ENCODE measurements at regions of chr5 and their contacts with region 1.

Region 1: DNA sequence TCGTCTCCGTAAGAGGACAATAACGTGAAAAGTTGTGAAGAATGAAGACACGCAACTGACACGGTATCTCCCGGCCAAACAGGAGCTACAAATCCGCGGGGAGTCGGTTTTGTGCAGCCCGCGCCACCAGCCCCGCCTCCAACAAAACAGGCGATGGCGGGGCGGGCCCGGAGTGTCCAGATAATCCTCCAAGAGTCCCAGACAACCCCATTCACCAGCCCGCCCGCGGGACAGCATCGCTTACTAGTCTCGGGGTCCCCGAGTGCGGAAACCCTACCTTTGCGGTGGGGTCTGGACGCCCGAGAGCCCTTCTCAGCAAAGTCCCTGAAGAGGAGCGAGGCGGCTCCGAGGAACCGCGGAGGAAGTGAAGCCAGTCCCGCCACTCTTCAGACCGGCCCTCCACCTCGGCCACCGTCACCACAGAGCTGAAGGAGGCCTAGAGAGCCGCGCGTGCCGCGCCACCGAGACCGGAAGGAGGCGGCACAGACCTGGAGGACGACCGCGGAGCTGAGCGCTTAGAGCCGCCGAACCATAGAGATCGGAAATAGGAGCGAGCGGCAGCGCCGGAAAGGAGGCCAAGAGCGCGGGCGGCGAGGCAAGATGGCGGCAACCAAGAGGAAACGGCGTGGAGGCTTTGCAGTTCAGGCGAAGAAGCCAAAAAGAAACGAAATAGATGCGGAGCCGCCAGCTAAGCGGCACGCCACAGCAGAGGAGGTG is at the starts of genes BRIX1 and RAD1:
- DNase-seq: peak; percentile 82 to 96 (median 91)
- ATAC-seq: peak; percentile 96 to 99 (median 98)
- H3K4me3 ChIP-seq: peak within 1 kb of the TSS; percentile 78 to 100
- H3K4me3 Mint-ChIP-seq: peak within 1 kb of the TSS in 1 of 3 donors; percentile 61
- H3K27ac ChIP-seq: peak within 1 kb of the TSS; percentile 84
- H3K27ac Mint-ChIP-seq: no peak within 1 kb of the TSS
- H3K4me1 ChIP-seq: peaks cover 20 to 21% of the 10 kb centered on the region in 2 experiments
- H3K4me1 Mint-ChIP-seq: peaks cover 34 to 38% (median 36%) of the 10 kb centered on the region in 3 donors
- H3K27me3 ChIP-seq: no peaks in the 10 kb centered on the region
- H3K27me3 Mint-ChIP-seq: no peaks in the 10 kb centered on the region
- total RNA-seq, gene BRIX1: 24.4 to 26.2 (median 24.4) TPM
- total RNA-seq, gene RAD1: 18.9 to 30.6 (median 20.7) TPM

Region 2: DNA sequence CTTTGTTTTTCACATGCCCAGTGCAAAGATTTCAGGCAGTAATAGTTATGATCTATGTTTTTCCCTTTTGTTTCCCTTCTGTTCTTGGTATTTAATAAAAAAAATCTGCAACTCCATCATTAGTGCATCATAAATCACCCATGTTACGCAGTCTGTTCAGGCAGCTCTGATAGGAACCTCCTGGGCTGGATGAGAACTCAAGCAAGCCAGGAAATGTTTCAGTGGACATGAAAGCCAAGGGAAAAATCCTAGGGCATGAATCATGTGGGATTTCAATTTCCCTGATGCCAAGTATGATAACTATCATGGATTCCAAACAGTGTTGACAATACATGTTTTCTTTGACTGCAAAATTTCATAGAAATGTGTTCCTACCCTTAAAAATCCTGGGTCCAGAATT is 1594.3 kb before region 1 on chr5:
- CTCF ChIA-PET with region 1: no interaction called
- POLR2A ChIA-PET with region 1: no interaction called
- DNase-seq: no peak
- ATAC-seq: no peak
- H3K4me3 ChIP-seq: no peak overlapping the region
- H3K4me3 Mint-ChIP-seq: no peak overlapping the region
- H3K27ac ChIP-seq: no peak overlapping the region
- H3K27ac Mint-ChIP-seq: no peak overlapping the region
- H3K4me1 ChIP-seq: no peaks in the 10 kb centered on the region
- H3K4me1 Mint-ChIP-seq: no peaks in the 10 kb centered on the region
- H3K27me3 ChIP-seq: no peaks in the 10 kb centered on the region
- H3K27me3 Mint-ChIP-seq: no peaks in the 10 kb centered on the region

Region 3: GRCh38 chr5:35083150-35083549 is 167.9 kb after region 1 on chr5:
- CTCF ChIA-PET with region 1: no interaction called
- POLR2A ChIA-PET with region 1: no interaction called
- DNase-seq: no peak
- ATAC-seq: no peak
- H3K4me3 ChIP-seq: no peak overlapping the region
- H3K4me3 Mint-ChIP-seq: no peak overlapping the region
- H3K27ac ChIP-seq: no peak overlapping the region
- H3K27ac Mint-ChIP-seq: no peak overlapping the region
- H3K4me1 ChIP-seq: no peaks in the 10 kb centered on the region
- H3K4me1 Mint-ChIP-seq: no peaks in the 10 kb centered on the region
- H3K27me3 ChIP-seq: peaks cover 0 to 8% of the 10 kb centered on the region in 2 experiments
- H3K27me3 Mint-ChIP-seq: peaks cover 7 to 8% of the 10 kb centered on the region in 2 donors

Region 4: DNA sequence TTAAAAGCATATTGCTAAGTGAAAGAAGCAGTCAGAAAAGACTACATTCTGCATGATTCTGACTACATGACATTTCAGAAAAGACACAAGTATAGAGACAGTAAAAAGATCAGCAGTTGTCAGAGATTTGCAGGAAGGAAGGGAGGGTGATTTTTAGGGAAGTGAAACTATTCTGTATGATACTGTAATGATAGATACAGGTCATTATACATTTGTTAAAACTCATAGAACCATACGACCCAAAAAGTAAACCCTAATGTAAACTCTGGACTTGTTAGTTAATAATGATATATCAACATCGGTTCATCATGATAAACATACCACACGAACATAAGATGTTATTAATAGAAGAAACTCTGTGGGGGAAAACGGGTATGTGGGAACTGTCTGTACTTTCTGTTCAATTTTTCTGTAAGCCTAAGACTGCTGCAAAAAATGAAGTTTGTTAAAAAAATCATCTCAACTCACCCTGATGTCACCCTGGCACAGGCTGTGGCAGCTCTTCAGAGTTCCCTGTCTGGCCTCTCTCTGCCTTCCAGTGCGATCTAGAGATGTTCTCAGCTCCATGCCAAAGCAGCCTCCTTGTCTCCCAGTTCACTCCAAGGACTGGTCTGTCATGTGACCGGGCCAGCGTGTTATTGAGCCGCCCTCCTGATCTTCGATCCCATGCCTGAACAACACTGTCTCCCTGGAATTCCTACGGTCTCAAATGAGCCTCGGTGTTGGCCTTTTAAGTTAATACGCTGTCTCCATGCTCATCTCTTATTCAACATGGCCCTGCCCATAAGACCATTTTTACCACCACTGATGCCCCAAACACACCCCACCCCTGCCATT is 279.6 kb after region 1 on chr5:
- CTCF ChIA-PET with region 1: no interaction called
- POLR2A ChIA-PET with region 1: no interaction called
- DNase-seq: no peak
- ATAC-seq: no peak
- H3K4me3 ChIP-seq: no peak overlapping the region
- H3K4me3 Mint-ChIP-seq: no peak overlapping the region
- H3K27ac ChIP-seq: no peak overlapping the region
- H3K27ac Mint-ChIP-seq: no peak overlapping the region
- H3K4me1 ChIP-seq: no peaks in the 10 kb centered on the region
- H3K4me1 Mint-ChIP-seq: peaks cover 0 to 3% (median 0%) of the 10 kb centered on the region in 3 donors
- H3K27me3 ChIP-seq: peaks cover 0 to 10% of the 10 kb centered on the region in 2 experiments
- H3K27me3 Mint-ChIP-seq: peaks cover 10 to 22% of the 10 kb centered on the region in 2 donors

Region 5: GRCh38 chr5:36569491-36569890 is 1654.2 kb after region 1 on chr5:
- CTCF ChIA-PET with region 1: no interaction called
- POLR2A ChIA-PET with region 1: interaction called in 1 of 2 experiments, 19 read pairs
- DNase-seq: no peak
- ATAC-seq: no peak
- H3K4me3 ChIP-seq: no peak overlapping the region
- H3K4me3 Mint-ChIP-seq: no peak overlapping the region
- H3K27ac ChIP-seq: no peak overlapping the region
- H3K27ac Mint-ChIP-seq: no peak overlapping the region
- H3K4me1 ChIP-seq: no peaks in the 10 kb centered on the region
- H3K4me1 Mint-ChIP-seq: no peaks in the 10 kb centered on the region
- H3K27me3 ChIP-seq: no peaks in the 10 kb centered on the region
- H3K27me3 Mint-ChIP-seq: no peaks in the 10 kb centered on the region

Measured in T-cell (primary cell).